ENCODE measurements at regions of chr19 and their contacts with region 1.

Region 1: DNA sequence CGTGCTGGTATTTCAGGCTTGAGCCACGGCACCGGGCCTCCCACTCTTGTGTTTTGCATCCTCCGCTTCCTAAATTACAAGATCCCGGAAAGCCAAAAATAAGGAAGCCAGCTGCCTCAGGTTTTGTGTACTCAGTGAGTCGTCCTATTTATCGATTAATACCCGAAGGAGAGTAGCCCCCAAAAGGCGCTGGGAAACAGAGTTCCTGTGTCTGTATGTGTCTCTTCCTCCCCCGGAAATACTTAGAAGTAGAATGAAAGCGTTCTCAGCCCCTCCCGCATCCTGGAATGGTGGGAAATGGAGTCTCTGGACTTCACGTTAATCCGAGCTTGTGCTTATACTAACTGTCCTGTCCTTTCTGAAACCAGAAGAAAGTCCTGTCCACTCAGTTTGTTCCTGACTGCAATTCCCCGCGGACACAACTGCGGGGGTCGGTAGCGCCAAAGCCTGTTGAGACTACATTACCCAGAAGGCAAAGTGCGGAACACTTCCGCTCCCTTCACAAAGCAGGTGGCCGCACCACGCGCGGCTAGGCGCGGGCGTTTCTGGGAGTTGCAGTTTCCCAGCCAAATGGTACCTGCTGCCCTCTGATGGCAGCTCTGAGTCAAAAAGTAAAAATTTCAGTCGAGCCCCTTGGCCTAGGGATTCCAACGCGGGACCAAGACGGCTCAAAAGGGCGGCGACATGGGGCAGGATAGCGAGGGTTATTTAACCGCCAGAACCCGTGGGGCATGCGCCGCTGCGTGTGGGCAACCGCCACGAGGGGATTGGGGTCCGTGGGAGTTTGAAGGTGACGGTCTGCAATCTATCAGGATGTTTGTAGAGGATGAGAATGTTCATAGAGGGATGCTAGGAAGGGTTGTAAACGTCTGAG is 2.2 kb upstream of the GSK3A start:
- DNase-seq: peak; percentile 67
- H3K4me3 ChIP-seq: peak overlapping the region; percentile 73
- H3K27me3 ChIP-seq: no peaks in the 10 kb centered on the region
- CTCF ChIP-seq: peak; percentile 74

Region 2: DNA sequence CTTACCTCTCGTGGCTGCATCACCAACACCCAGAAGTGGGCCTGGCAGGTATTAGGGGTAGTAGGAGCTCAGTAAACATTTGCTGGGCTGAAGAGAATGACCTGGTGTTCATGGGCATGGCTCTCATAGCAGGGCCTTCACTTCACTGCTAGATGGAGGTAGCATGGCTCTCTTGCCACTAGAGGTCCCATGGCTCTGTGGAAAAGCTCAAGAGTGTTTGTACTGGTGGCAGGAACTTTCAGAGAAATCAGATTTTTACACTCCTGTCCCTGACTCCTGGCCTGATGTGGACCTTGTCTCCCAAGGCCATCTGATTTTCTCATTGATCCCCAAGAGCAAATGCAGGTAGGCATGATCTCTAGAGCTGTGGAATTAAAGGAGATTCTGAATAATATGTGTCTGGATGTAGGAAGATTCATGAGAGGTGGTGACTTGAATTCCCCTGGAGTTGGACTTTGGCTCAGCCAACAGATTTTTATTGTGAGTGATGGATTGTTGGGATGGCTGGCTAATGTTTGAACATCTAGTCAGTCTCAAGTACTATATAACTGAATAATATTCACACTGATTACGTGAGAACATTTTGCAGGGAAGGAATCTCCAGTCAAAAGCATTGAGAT is 162.9 kb before region 1 on chr19:
- CTCF ChIA-PET with region 1: interaction called, 10 read pairs
- POLR2A ChIA-PET with region 1: no interaction called
- DNase-seq: no peak
- H3K4me3 ChIP-seq: no peak overlapping the region
- H3K27me3 ChIP-seq: no peaks in the 10 kb centered on the region
- CTCF ChIP-seq: peak; percentile 76

Region 3: DNA sequence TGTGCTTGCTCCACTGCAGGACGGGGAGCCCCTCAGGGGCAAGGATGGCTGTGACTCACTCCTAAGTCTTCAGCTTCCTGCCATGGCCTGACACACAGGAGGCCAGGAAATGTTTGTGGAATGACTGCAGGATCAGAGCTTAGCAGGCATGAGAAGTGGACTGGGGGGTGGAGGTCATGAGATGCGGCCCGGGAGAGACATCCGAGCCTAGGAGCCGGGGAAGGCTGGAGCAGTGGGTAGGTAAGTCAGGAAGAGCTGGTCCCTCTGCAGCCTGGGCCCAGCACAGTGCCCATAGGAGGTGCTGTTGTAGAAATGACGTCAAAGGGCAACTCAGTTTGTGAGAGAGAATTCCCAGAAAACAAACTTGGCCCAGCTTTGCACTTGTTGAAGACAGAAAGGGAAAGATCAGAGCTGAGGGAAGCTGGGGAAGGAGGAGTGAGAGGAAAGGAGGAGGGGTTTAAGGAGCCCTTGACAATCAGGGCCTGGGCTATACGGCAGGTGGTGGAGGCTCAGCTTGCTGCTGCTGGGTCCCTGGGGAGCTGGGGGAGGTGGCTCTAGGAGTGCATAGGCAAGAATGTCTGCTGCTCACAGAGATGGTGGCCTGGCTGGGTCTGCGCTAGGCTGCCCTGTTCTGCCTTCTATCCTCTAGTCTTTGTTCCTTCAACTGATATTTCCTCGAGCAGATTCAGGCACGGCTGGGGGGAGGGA is 130.8 kb before region 1 on chr19:
- CTCF ChIA-PET with region 1: interaction called, 13 read pairs
- POLR2A ChIA-PET with region 1: no interaction called
- DNase-seq: peak; percentile 91
- H3K4me3 ChIP-seq: no peak overlapping the region
- H3K27me3 ChIP-seq: no peaks in the 10 kb centered on the region
- CTCF ChIP-seq: peak; percentile 35; the same call in 1 of the 2 replicates

Region 4: GRCh38 chr19:42254989-42255765 is 10.6 kb after region 1 on chr19 and contains the start of gene ERF:
- CTCF ChIA-PET with region 1: interaction called, 10 read pairs
- POLR2A ChIA-PET with region 1: interaction called, 8 read pairs
- DNase-seq: peak; percentile 38
- H3K4me3 ChIP-seq: peak within 1 kb of the TSS; percentile 100
- H3K27me3 ChIP-seq: no peaks in the 10 kb centered on the region
- CTCF ChIP-seq: no peak
- polyA plus RNA-seq, gene ERF: 47.4 and 51.4 TPM in 2 replicates

Region 5: GRCh38 chr19:42283143-42284065 is 38.8 kb after region 1 on chr19:
- CTCF ChIA-PET with region 1: interaction called, 135 read pairs
- POLR2A ChIA-PET with region 1: no interaction called
- DNase-seq: peak; percentile 60
- H3K4me3 ChIP-seq: peak overlapping the region; percentile 66
- H3K27me3 ChIP-seq: no peaks in the 10 kb centered on the region
- CTCF ChIP-seq: no peak

Region 6: DNA sequence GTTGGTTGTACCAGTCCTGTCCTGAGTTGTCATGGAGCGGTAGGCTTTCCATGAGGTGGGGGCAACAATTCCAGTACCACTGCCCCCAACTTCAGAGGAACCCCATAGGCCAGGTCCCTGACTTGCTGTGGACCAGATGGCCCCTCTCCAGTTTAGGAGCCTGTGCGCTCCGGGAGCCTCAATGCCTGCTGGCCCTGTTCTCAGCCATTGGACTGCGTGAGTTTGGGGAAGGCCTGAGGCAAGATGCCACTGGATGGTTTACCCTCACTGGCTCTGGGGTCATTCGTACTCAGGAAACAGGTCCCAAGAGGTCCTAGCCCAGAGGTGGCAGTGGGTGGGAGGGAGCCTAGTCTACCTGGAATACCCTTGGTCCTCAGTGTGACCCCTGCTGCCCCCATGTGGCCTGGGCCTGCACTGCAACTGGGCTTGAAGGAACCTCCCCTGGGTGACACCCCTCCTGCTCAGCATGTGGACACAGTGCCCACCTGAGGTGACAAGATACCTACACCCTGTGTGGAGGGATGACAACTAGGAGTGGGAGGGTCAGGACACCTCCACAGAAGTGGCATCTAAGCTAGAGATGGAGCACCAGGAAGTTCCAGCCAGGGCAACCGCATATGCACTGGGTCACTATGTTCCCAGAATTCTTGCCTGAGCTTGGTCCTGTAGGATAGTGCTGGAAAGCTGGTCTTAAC is 51.4 kb after region 1 on chr19:
- CTCF ChIA-PET with region 1: interaction called, 109 read pairs
- POLR2A ChIA-PET with region 1: interaction called, 3 read pairs
- DNase-seq: no peak
- H3K4me3 ChIP-seq: no peak overlapping the region
- H3K27me3 ChIP-seq: no peaks in the 10 kb centered on the region
- CTCF ChIP-seq: peak; percentile 98